ENCODE measurements at regions of chr13 and their contacts with region 1.

Region 1: DNA sequence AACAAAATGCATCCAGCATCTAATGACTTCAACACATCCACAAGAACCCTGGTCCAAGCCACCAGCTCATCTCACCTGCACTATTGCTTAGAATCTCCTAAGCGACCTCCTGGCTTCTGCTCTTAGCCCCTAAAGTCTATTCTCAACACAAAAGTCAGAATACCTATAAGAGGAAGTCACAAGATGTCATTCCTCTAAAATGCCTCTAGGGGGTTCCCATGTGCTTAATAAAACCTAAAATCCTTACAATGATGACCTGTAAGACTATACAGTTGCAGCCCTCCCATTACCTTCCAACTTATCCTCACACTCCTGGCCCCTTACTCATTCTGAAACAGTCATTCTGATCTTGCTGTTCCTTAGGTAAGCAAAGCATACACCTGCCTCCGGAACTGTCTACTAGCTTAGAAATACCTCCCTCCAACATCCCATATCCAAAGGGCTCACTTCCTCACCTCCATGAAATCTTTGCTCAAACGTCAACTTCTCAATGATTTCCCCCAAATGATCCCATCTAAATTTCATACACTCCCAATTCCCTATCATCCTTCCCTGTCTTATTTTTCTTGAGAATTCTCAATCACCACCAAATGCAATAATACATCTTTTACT is 10.0 kb downstream of the ATP7B start:
- DNase-seq: no peak
- ATAC-seq: peak; percentile 97
- H3K4me3 Mint-ChIP-seq: no peak overlapping the region
- H3K27ac Mint-ChIP-seq: no peak overlapping the region
- H3K4me1 Mint-ChIP-seq: no peaks in the 10 kb centered on the region
- H3K27me3 Mint-ChIP-seq: peaks cover 9% of the 10 kb centered on the region
- CTCF ChIP-seq: peak; percentile 81

Region 2: DNA sequence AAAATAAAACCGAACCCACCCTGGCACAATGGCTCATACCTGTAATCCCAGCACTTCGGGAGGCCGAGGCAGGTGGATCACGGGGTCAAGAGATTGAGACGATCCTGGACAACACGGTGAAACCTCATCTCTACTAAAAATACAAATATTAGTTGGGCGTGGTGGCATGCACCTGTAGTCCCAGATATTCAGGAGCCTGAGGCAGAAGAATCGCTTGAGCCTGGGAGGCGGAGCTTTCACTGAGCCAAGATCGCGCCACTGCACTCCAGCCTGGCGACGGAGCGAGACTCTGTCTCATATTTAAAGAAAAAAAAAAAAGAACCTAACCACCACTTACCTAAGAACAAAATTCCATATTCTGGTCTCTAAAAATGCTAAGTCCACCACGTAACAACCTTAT is 10.4 kb before region 1 on chr13:
- CTCF ChIA-PET with region 1: interaction called, 10 read pairs
- POLR2A ChIA-PET with region 1: interaction called, 3 read pairs
- intact Hi-C with region 1: no loop called
- DNase-seq: no peak
- ATAC-seq: no peak
- H3K4me3 Mint-ChIP-seq: no peak overlapping the region
- H3K27ac Mint-ChIP-seq: no peak overlapping the region
- H3K4me1 Mint-ChIP-seq: no peaks in the 10 kb centered on the region
- H3K27me3 Mint-ChIP-seq: peaks cover 5% of the 10 kb centered on the region
- CTCF ChIP-seq: no peak

Region 3: GRCh38 chr13:52091473-52091872 is 90.2 kb after region 1 on chr13:
- CTCF ChIA-PET with region 1: no interaction called
- POLR2A ChIA-PET with region 1: no interaction called
- intact Hi-C with region 1: no loop called
- DNase-seq: no peak
- ATAC-seq: no peak
- H3K4me3 Mint-ChIP-seq: no peak overlapping the region
- H3K27ac Mint-ChIP-seq: no peak overlapping the region
- H3K4me1 Mint-ChIP-seq: no peaks in the 10 kb centered on the region
- H3K27me3 Mint-ChIP-seq: no peaks in the 10 kb centered on the region
- CTCF ChIP-seq: no peak

Measured in activated CD8-positive, alpha-beta T cell treated with anti-CD3 and anti-CD28 coated beads for 36 hours (primary cell).